Tibial artery (tissue), 4 donors: ENCODE measurements at regions of chr1 and their contacts with region 1.

Region 1: DNA sequence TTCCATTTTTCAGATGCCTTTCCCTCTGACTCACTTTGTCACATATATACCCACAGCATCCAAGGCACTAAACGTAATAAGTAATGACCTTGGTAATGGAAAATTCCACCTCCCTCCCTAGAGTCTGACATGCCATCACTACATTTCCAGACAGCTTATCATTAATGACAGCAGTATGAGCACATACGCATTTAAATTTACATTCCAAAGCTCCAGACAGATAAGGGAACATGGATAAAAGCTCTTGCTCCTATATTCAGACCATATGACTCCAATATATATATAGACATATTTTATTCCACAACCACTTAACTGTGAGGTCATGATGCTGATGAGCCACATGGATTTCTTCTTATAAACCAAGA is 191.6 kb upstream of the GORAB start:
- DNase-seq: no peak
- H3K4me3 ChIP-seq: no peak overlapping the region
- H3K27ac ChIP-seq: no peak overlapping the region
- H3K4me1 ChIP-seq: peaks cover 0 to 10% (median 0%) of the 10 kb centered on the region in 4 donors
- H3K27me3 ChIP-seq: no peaks in the 10 kb centered on the region
- CTCF ChIP-seq: no peak

Region 2: GRCh38 chr1:170049176-170049800 is 291.0 kb before region 1 on chr1:
- intact Hi-C with region 1: no loop called
- DNase-seq: no peak
- H3K4me3 ChIP-seq: no peak overlapping the region
- H3K27ac ChIP-seq: no peak overlapping the region
- H3K4me1 ChIP-seq: no peaks in the 10 kb centered on the region
- H3K27me3 ChIP-seq: no peaks in the 10 kb centered on the region
- CTCF ChIP-seq: no peak

Region 3: DNA sequence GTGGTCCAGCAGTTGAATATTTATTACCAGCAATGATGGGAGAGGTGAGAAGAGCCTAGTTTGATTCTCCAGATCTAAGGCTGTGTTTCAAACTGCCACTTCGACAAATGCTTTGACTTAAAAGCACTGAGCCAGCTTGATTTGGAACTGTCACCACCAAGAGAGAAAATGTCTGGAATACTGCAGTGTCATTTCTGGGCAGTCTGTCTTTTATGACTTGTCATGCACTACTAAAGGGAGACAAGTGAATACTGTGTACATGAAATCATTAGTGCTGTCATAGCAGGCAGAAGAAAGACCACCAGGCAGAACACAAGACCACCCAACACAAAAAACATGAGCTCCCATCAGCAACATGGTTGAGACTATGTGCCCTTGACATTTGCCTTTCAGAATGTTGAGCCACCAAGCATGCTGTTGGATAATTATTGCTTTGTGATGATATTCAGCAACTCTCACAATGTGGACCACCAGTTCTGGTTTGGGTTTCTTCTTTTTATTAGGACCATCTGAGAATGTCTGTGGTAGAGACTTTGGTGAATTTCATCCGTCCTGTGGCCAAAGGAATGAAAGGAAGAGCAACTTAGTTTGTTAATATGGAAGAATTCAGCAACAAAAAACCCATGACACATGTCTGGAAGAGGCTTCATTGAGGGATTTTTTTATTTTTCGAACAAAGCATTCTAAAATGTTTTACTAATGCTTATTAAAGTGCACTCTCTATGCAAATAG is 68.7 kb before region 1 on chr1:
- intact Hi-C with region 1: loop called (anchors 2 kb)
- DNase-seq: no peak
- H3K4me3 ChIP-seq: no peak overlapping the region
- H3K27ac ChIP-seq: no peak overlapping the region
- H3K4me1 ChIP-seq: peaks cover 0 to 8% (median 0%) of the 10 kb centered on the region in 4 donors
- H3K27me3 ChIP-seq: no peaks in the 10 kb centered on the region
- CTCF ChIP-seq: no peak